Activated CD4-positive, alpha-beta T cell treated with anti-CD3 and anti-CD28 coated beads for 36 hours (primary cell): ENCODE measurements at regions of chr22 and their contacts with region 1.

Region 1: DNA sequence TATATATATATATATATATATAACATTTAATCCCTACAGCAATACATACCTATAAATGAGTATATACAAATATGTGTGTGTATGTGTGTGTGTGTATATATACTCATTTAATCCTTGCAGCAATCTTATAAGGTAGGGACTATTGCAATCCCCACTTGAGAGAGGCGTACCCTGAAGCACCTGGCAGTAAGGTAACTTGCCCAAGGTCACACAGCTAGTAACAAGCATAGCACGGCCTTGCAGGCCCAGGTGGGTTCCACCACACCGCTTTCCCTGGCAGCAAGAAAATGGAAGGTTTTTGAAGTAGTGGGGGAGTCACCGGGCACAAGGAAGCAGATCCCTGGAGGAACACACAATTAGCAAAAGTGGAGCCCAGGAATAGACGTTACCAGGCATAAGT is 3.3 kb upstream of the ADA2 start:
- DNase-seq: no peak
- ATAC-seq: no peak
- H3K4me3 Mint-ChIP-seq: no peak overlapping the region
- H3K27ac Mint-ChIP-seq: no peak overlapping the region
- H3K4me1 Mint-ChIP-seq: peaks cover 43% of the 10 kb centered on the region
- H3K27me3 Mint-ChIP-seq: no peaks in the 10 kb centered on the region

Region 2: DNA sequence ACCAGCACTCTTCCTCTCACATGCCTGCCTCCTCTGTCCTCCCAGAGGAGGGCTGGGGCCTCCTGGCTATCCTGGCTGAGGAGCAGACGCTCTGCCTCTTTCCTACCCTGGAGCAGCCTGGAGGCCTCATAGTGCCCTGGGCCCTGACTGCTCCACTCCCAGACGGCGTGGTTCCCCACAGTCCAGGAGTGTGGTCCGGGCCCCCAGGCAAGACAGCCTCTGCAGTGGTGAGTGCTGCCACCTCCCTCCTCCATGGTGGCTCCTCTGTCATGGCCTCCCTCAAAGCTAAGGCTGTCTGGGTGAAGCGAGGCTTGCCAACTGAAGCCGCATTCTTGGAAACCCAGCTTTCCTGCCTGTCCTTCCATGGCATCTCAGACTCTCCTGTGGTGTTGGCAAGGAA is 234.2 kb before region 1 on chr22:
- CTCF ChIA-PET with region 1: no interaction called
- POLR2A ChIA-PET with region 1: no interaction called
- intact Hi-C with region 1: no loop called
- DNase-seq: no peak
- ATAC-seq: no peak
- H3K4me3 Mint-ChIP-seq: no peak overlapping the region
- H3K27ac Mint-ChIP-seq: no peak overlapping the region
- H3K4me1 Mint-ChIP-seq: no peaks in the 10 kb centered on the region
- H3K27me3 Mint-ChIP-seq: peaks cover 19% of the 10 kb centered on the region

Region 3: GRCh38 chr22:17121227-17122195 is 101.0 kb before region 1 on chr22 and contains the start of gene TMEM121B:
- CTCF ChIA-PET with region 1: no interaction called
- POLR2A ChIA-PET with region 1: no interaction called
- intact Hi-C with region 1: loop called in 1 of 2 experiments (anchors 5 kb)
- DNase-seq: peak; percentile 65
- ATAC-seq: peak; percentile 42
- H3K4me3 Mint-ChIP-seq: peak within 1 kb of the TSS; percentile 61
- H3K27ac Mint-ChIP-seq: no peak within 1 kb of the TSS
- H3K4me1 Mint-ChIP-seq: peaks cover 32% of the 10 kb centered on the region
- H3K27me3 Mint-ChIP-seq: peaks cover 19% of the 10 kb centered on the region
- total RNA-seq, gene TMEM121B: 0.14 to 0.19 TPM